Dendritic cell treated with granulocyte-macrophage colony-stimulating factor and Interleukin-4, amounts not matched to agents 40 ng/mL and 50 ng/mL, for 4 days (primary cell): ENCODE measurements at regions of chr5 and their contacts with region 1.

Region 1: DNA sequence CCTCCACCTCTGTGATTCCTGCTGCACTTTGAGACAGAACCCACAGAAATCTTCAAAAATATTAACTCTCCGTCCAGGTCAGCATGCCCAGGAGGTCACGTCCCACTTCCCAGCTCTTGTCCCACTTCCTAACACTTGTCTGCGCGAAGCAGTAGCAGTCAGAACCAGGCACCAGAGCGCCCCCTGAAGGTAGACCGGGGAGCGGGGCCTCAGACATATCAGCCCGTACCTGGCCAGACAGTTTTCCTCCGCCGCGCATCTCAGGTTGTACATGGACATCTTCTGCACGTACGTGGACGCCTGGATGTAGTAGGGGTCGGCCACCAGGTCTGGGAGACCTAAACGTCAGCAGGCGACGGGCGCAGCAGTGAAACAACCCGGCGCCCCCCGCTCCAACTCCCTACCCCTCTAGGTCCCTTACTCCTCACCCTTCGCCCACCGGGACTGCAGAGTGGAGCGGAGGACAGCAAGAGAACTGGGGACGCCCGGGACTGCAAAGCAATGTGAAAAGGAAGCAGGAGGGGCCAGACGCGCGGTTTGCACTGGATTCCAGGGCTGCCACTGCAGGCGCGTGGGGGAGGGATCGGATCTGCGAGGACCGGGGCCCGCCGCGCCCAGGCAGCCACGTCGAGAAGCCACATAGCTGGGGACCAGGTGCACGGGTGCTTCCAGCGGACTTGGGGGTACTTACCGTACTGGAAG is 1.2 kb downstream of the LOX start:
- H3K4me3 Mint-ChIP-seq: peak overlapping the region; percentile 68
- H3K27ac Mint-ChIP-seq: no peak overlapping the region
- H3K4me1 Mint-ChIP-seq: peaks cover 17% of the 10 kb centered on the region
- H3K27me3 Mint-ChIP-seq: peaks cover 45% of the 10 kb centered on the region

Region 2: GRCh38 chr5:121968910-121969607 is 107.8 kb before region 1 on chr5:
- intact Hi-C with region 1: loop called (anchors 10 kb)
- H3K4me3 Mint-ChIP-seq: no peak overlapping the region
- H3K27ac Mint-ChIP-seq: no peak overlapping the region
- H3K4me1 Mint-ChIP-seq: peaks cover 24% of the 10 kb centered on the region
- H3K27me3 Mint-ChIP-seq: no peaks in the 10 kb centered on the region